Breast epithelium (tissue), 4 donors: ENCODE measurements at regions of chr2 and their contacts with region 1.

Region 1: DNA sequence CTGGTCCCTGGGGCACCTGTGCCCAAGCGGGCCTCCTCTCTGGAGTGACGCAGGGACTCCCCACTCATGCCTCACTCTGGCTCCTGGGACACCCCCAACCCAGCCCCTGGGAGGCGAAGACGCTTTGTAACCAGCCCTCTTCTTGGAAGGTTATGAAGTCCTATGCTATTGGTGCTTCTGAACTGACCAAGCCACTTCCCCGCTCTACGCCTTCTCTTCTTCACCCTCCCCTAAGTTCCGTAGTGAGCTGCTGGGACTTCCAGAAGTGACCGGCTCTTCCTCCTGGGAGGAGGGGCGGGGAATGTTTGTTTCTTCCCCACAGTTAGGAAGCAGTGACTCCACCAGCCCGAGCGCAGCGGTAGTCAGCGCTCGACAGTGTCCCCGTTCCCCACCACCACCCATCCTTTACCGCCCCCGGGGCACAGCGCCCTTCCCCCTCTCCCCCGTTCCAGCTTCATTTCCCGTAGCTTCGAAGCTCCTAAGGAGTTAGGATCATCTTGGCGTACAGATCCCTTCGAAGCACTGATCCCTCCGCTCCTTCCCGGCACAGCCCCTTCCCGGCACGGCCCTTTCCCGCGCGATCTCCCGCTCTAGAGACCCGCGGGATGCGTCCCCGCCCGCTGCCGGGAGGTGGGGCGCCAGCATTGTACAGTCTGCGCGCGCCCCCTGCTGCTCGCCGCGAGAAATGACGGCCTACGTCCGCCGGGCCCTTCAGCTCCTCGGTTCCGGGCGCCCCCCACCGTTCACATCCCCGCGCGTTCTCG is 25.3 kb upstream of the NOTO start:
- DNase-seq: peak; percentile 72 to 89
- H3K4me3 ChIP-seq: peak overlapping the region; percentile 50 to 77 (median 62)
- H3K27ac ChIP-seq: peak overlapping the region; percentile 58 to 92
- H3K4me1 ChIP-seq: no peaks in the 10 kb centered on the region
- H3K27me3 ChIP-seq: peaks cover 0 to 19% of the 10 kb centered on the region in 2 donors
- CTCF ChIP-seq: peak; percentile 93 to 98 (median 93)
- POLR2A ChIP-seq: no peak

Region 2: GRCh38 chr2:72104821-72105588 is 1072.1 kb before region 1 on chr2:
- intact Hi-C with region 1: no loop called
- DNase-seq: no peak
- H3K4me3 ChIP-seq: no peak overlapping the region
- H3K27ac ChIP-seq: no peak overlapping the region
- H3K4me1 ChIP-seq: no peaks in the 10 kb centered on the region
- H3K27me3 ChIP-seq: no peaks in the 10 kb centered on the region
- CTCF ChIP-seq: no peak
- POLR2A ChIP-seq: no peak

Region 3: DNA sequence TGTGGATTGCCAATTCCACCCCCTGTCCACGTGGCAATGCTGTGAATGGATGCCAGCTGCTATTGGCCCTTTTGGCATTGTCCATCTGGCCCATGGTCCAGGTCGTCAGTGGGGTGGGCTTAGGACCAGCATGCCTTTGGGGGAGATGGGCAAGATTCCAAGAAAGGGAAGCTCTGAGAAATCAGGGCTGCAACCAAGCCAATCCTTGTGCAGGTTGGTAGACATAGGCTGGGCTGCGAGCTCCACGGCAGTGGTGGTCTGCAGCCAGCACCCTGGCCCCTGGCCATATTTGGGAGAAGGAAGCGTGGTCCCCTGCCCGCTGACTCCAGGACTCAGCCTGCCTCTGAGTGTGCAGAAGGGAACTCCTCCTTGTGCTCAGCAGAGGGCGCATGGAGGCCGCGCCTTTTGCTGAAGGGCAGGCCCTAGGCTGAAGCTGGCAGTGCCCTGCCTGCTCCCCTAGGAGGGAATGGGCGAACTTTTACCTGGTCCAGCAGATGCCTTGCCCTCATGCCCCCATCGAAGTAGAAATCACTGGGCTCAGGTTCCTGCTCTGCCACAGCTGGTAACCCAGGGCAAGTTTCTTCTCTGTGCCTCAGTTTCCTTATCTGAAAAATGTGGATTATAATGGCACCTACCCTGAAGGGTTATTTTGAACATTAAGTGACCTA is 284.4 kb before region 1 on chr2:
- intact Hi-C with region 1: loop called (anchors 10 kb)
- DNase-seq: no peak
- H3K4me3 ChIP-seq: no peak overlapping the region
- H3K27ac ChIP-seq: no peak overlapping the region
- H3K4me1 ChIP-seq: peaks cover 0 to 8% of the 10 kb centered on the region in 2 donors
- H3K27me3 ChIP-seq: peaks cover 0 to 17% of the 10 kb centered on the region in 2 donors
- CTCF ChIP-seq: peak in 2 of 3 donors; percentile 39 to 49
- POLR2A ChIP-seq: no peak

Region 4: GRCh38 chr2:72973566-72974435 is 203.3 kb before region 1 on chr2:
- intact Hi-C with region 1: no loop called
- DNase-seq: no peak
- H3K4me3 ChIP-seq: no peak overlapping the region
- H3K27ac ChIP-seq: no peak overlapping the region
- H3K4me1 ChIP-seq: no peaks in the 10 kb centered on the region
- H3K27me3 ChIP-seq: no peaks in the 10 kb centered on the region
- CTCF ChIP-seq: peak in 2 of 3 donors; percentile 32 to 51
- POLR2A ChIP-seq: no peak

Region 5: GRCh38 chr2:72993147-72993932 is 183.7 kb before region 1 on chr2:
- intact Hi-C with region 1: loop called (anchors 10 kb)
- DNase-seq: peak in 1 of 2 donors; percentile 15
- H3K4me3 ChIP-seq: no peak overlapping the region
- H3K27ac ChIP-seq: no peak overlapping the region
- H3K4me1 ChIP-seq: peaks cover 7% of the 10 kb centered on the region in 2 donors
- H3K27me3 ChIP-seq: no peaks in the 10 kb centered on the region
- CTCF ChIP-seq: peak; percentile 35 to 71 (median 70)
- POLR2A ChIP-seq: no peak

Region 6: DNA sequence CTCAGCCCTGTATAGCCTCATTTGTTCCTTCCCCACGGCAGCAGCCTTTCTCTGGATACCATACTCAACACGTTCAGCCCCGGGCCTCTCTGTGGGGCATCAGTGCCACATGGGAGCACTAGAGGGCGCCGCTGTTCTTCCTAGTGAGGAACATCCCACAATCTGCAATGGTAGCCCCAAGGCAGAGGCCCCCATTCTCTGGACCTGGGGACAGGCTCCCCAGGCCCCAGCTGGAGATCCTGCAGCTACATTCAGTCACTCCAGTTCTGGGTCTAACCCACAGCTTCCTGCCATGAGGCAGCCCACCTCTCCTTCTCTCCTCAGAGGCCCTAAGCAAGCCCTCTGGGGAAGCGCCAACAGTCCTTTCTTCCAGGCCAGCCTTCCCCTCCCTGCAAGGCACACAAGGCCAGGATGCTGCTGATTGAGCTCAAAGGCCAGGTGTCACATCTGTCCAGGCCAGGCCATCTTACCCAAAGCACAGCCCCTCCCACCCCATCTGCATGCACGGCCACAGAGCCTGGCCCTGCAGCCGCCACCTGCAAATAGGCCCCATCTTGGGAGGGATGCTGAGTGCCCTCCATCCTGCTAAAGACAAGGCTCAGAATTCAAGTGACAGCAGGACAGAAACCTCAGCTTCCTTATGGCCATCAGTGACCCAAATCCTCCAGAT is 91.2 kb before region 1 on chr2:
- intact Hi-C with region 1: loop called (anchors 10 kb)
- DNase-seq: peak in 1 of 2 donors; percentile 60
- H3K4me3 ChIP-seq: no peak overlapping the region
- H3K27ac ChIP-seq: no peak overlapping the region
- H3K4me1 ChIP-seq: no peaks in the 10 kb centered on the region
- H3K27me3 ChIP-seq: no peaks in the 10 kb centered on the region
- CTCF ChIP-seq: peak; percentile 30 to 73 (median 67)
- POLR2A ChIP-seq: no peak